Activated B cell treated with CpG ODN at 0.5 μM for 24 hours (primary cell): ENCODE measurements at regions of chr1 and their contacts with region 1.

Region 1: GRCh38 chr1:89198491-89199072 is at the start of gene GBP4:
- DNase-seq: peak; percentile 27
- ATAC-seq: peak; percentile 47
- H3K4me3 Mint-ChIP-seq: peak within 1 kb of the TSS; percentile 96
- H3K27ac Mint-ChIP-seq: peak within 1 kb of the TSS; percentile 92
- H3K4me1 Mint-ChIP-seq: peaks cover 76% of the 10 kb centered on the region
- H3K27me3 Mint-ChIP-seq: no peaks in the 10 kb centered on the region
- CTCF ChIP-seq: no peak
- total RNA-seq, gene GBP4: 19.2 and 19.5 TPM in 2 replicates

Region 2: GRCh38 chr1:88922214-88922613 is 276.4 kb before region 1 on chr1:
- CTCF ChIA-PET with region 1: no interaction called
- POLR2A ChIA-PET with region 1: no interaction called
- intact Hi-C with region 1: no loop called
- DNase-seq: no peak
- ATAC-seq: no peak
- H3K4me3 Mint-ChIP-seq: no peak overlapping the region
- H3K27ac Mint-ChIP-seq: no peak overlapping the region
- H3K4me1 Mint-ChIP-seq: no peaks in the 10 kb centered on the region
- H3K27me3 Mint-ChIP-seq: no peaks in the 10 kb centered on the region
- CTCF ChIP-seq: no peak

Region 3: GRCh38 chr1:89125913-89126580 is 72.5 kb before region 1 on chr1 and contains the start of gene GBP2:
- CTCF ChIA-PET with region 1: interaction called, 4 read pairs
- POLR2A ChIA-PET with region 1: interaction called, 6 read pairs
- intact Hi-C with region 1: loop called (anchors 1 kb)
- DNase-seq: no peak
- ATAC-seq: peak; percentile 79
- H3K4me3 Mint-ChIP-seq: peak within 1 kb of the TSS; percentile 90
- H3K27ac Mint-ChIP-seq: peak within 1 kb of the TSS; percentile 92
- H3K4me1 Mint-ChIP-seq: peaks cover 64% of the 10 kb centered on the region
- H3K27me3 Mint-ChIP-seq: no peaks in the 10 kb centered on the region
- CTCF ChIP-seq: no peak
- total RNA-seq, gene GBP2: 24.4 and 26.7 TPM in 2 replicates

Region 4: DNA sequence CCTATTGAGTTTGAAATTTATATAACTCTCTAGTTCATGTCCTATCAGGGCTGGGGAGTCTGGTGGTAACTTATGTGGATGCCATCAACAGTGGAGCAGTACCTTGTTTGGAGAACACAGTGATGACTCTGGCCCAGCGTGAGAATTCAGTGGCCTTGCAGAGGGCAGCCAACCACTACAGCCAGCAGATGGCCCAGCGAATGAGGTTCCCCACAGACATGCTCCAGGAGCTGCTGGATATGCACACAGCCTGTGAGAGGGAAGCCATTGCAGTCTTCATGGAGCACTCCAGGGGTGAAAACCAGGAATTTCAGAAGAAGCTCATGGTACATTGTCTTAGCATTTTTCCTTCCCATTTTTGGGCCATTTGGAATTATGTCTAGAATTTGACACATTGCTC is 133.3 kb after region 1 on chr1:
- CTCF ChIA-PET with region 1: no interaction called
- POLR2A ChIA-PET with region 1: no interaction called
- intact Hi-C with region 1: no loop called
- DNase-seq: no peak
- ATAC-seq: no peak
- H3K4me3 Mint-ChIP-seq: no peak overlapping the region
- H3K27ac Mint-ChIP-seq: no peak overlapping the region
- H3K4me1 Mint-ChIP-seq: no peaks in the 10 kb centered on the region
- H3K27me3 Mint-ChIP-seq: no peaks in the 10 kb centered on the region
- CTCF ChIP-seq: no peak

Region 5: DNA sequence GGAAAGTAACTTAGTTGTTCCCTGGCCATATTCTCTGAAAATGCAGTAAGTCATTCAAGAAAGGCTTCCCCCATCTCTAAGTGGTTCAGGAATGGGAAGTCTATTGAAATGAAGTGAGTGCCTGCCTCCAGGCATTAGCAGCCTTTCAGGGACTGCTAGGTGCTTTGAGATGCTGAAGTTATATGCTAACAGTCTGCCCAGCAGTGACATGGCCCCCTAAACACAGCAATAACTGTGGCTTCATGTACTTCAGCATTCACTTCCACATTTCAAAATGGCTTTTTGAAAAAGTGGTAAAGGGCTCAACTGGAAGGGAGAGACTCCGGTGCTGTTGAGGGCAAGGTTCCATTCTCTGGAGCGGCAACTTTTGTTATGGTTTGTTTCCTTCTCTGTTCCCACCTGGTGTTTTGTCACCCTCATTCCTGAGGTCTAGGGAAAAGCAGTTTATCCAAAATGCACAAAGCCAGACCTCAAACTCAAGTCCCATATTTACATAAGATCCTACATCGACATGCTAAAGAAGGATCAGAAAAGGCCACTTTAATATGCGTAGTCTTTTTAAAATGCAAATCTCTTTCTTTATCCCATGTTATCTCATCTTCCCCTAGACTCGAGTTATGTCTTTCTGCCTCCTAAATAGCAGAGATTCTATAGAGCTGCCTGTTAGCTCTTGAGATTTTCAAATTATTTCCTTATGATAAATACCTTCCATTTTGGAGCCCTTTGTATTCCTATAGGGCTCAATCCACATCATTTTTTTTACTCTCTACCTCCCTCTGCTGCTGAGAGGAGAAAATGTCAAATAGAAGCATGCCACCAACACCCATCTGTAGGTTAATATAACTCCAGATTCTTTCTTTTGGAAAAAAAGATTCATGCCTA is 400.1 kb after region 1 on chr1:
- CTCF ChIA-PET with region 1: no interaction called
- POLR2A ChIA-PET with region 1: no interaction called
- intact Hi-C with region 1: no loop called
- DNase-seq: no peak
- ATAC-seq: peak; percentile 62
- H3K4me3 Mint-ChIP-seq: no peak overlapping the region
- H3K27ac Mint-ChIP-seq: no peak overlapping the region
- H3K4me1 Mint-ChIP-seq: peaks cover 4% of the 10 kb centered on the region
- H3K27me3 Mint-ChIP-seq: no peaks in the 10 kb centered on the region
- CTCF ChIP-seq: peak; percentile 24